Activated CD8-positive, alpha-beta T cell treated with anti-CD3 and anti-CD28 coated beads for 36 hours (primary cell): ENCODE measurements at regions of chr10 and their contacts with region 1.

Region 1: DNA sequence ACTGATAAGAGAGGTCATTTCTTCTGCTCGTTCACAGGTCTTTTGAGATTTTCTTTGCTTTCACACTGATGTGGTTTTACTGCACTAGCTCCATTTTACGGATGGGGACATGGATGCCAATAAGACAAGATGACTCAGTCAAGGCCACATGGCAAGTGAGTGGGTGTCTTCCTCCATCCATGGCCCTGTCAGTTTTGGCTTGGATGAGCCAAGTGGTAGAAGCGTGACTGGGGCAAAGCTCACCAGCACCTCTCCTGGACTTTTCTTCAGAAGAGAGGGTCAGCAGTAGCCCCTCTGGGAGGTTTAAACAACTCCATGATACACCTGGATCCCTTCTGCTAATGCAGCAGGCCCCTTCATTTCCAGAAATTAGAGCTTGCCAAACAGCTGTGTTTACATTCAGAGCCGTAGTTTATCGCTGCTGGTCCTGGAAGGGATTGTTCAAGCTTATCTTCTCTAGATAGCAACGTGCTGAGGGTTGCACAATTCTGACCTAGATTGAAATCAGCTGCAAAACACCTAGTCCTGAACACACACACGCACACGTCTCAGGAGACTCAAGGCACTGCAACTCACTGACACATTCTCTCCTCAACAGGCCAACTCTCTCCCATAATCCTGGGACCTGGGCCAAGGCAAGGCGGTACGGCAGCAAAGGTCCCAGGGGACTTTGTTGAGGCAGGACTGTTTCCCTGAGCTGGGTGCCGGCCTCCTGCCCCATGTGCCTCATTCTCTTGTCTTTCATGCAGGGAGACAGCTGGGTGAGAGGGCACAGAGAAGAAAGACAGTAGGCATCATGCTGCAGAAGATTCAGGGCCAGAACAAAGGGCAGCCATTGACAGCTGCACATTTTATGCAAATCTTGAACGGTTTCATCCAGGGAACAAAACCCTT is 14.2 kb upstream of the PDCD4 start:
- DNase-seq: peak; percentile 60
- ATAC-seq: peak; percentile 37
- H3K4me3 Mint-ChIP-seq: peak overlapping the region; percentile 8
- H3K27ac Mint-ChIP-seq: peak overlapping the region; percentile 85
- H3K4me1 Mint-ChIP-seq: peaks cover 75% of the 10 kb centered on the region
- H3K27me3 Mint-ChIP-seq: no peaks in the 10 kb centered on the region
- CTCF ChIP-seq: no peak

Region 2: DNA sequence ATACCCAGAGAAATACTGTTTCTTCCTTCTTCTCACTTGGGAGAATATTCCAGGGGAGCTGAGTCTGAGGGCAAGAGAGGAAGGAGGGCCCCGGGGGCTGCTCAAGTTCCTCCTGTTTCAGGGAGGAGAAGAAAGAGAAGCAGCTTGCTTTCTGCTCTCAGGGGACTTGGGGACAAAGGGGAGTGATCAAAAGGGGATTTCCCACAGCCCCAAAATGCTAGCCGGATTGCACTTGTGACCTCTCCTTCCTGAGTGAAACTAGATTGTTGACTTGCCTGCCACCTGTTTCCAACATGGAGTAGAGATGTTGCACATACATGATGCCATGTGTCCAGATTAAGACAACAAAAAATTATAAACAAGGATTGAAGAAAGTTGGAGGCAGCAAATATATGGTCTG is 14.5 kb before region 1 on chr10:
- CTCF ChIA-PET with region 1: interaction called, 8 read pairs
- POLR2A ChIA-PET with region 1: interaction called, 25 read pairs
- intact Hi-C with region 1: no loop called
- DNase-seq: peak; percentile 82
- ATAC-seq: peak; percentile 76
- H3K4me3 Mint-ChIP-seq: peak overlapping the region; percentile 44
- H3K27ac Mint-ChIP-seq: peak overlapping the region; percentile 86
- H3K4me1 Mint-ChIP-seq: peaks cover 52% of the 10 kb centered on the region
- H3K27me3 Mint-ChIP-seq: no peaks in the 10 kb centered on the region
- CTCF ChIP-seq: no peak

Region 3: DNA sequence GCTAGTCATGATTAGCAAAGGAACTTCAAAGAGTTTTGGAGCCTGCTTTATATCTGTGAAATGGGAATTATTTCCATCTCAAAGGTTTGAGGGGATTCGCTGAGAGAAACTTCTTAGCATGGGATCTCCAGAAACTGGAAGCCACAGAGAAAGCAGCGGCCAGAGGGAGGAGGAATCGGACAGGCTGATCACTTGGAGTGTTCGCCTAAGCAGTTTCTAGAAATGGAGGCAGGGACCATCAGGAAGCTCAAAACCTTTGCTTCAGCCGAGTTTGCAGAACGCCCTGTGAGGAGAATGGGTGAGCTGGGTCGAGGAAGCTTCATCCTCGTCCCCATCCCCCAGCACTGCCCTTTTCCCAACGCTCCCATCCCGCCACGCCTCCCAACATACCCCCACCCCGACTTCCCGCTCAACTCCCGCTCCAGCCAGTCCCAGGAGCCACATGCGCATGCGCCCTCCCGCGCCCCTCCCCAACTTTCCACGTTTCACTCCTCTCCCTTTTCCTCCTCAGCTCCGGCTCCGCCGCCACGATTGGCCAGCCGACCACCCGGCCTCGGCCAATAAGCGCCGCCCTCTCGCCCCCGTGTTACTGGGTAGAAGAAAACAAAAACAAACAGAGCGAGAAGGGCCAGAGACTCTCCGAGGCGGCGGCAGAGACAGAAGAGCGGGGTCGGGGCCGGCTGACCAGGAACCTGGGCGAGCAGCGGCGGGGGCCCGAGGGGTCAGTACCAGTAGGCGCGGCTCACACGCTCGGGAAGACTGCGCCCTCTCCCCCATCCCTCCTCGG is 14.0 kb after region 1 on chr10 and contains the start of gene PDCD4:
- CTCF ChIA-PET with region 1: interaction called, 10 read pairs
- POLR2A ChIA-PET with region 1: interaction called, 15 read pairs
- intact Hi-C with region 1: no loop called
- DNase-seq: peak; percentile 97
- ATAC-seq: peak; percentile 75
- H3K4me3 Mint-ChIP-seq: peak within 1 kb of the TSS; percentile 86
- H3K27ac Mint-ChIP-seq: peak within 1 kb of the TSS; percentile 95
- H3K4me1 Mint-ChIP-seq: peaks cover 59% of the 10 kb centered on the region
- H3K27me3 Mint-ChIP-seq: no peaks in the 10 kb centered on the region
- CTCF ChIP-seq: no peak
- total RNA-seq, gene PDCD4: 186 to 190 TPM